ENCODE measurements at regions of chr5 and their contacts with region 1.

Region 1: GRCh38 chr5:148179234-148179824 is 11.0 kb downstream of the SPINK14 start:
- DNase-seq: peak in 1 of 2 donors; percentile 84
- H3K4me3 ChIP-seq: no peak overlapping the region
- H3K27ac ChIP-seq: no peak overlapping the region
- H3K4me1 ChIP-seq: peaks cover 0 to 6% (median 0%) of the 10 kb centered on the region in 4 donors
- H3K27me3 ChIP-seq: no peaks in the 10 kb centered on the region
- CTCF ChIP-seq: peak in 5 of 7 experiments; percentile 13 to 62 (median 60)
- EP300 ChIP-seq: no peak
- POLR2A ChIP-seq: no peak

Region 2: DNA sequence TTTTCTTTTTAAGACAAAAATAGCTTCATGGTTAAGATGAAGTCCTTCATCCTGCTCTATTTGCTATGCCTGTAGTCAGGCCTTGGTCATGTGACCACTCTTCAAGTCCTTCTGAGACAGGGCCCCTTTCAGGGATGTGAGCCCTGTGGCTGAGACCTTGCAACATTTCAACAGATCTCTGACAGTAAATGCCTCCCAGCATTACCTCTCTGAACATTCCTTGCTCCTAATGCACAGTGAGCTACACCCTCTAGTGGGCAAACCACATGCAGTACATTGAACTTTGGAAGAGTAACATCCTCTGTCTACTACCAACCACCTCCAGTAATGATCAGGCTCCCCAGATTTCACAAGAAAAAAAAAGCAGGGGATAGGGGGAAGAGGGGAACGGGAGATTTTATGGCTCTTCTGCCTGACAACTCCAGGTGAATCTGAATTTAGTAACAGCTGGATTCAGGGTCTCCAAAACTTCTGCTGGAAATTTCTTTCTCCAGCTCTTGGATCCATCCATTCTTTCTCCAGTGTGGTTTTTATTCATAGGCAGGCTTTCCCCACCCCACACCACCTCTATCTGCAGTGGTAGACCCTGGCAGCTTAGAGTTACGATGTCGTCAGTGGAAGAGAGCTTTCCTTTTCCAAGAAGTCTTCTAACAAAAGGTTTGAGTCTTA is 195.5 kb after region 1 on chr5:
- intact Hi-C with region 1: loop called (anchors 10 kb)
- DNase-seq: peak; percentile 42 to 76
- H3K4me3 ChIP-seq: no peak overlapping the region
- H3K27ac ChIP-seq: no peak overlapping the region
- H3K4me1 ChIP-seq: peaks cover 0 to 28% (median 3%) of the 10 kb centered on the region in 4 donors
- H3K27me3 ChIP-seq: no peaks in the 10 kb centered on the region
- CTCF ChIP-seq: peak in 5 of 7 experiments; percentile 50 to 74 (median 64)
- EP300 ChIP-seq: no peak
- POLR2A ChIP-seq: no peak

Region 3: GRCh38 chr5:148523139-148523538 is 343.8 kb after region 1 on chr5:
- intact Hi-C with region 1: no loop called
- DNase-seq: no peak
- H3K4me3 ChIP-seq: no peak overlapping the region
- H3K27ac ChIP-seq: no peak overlapping the region
- H3K4me1 ChIP-seq: no peaks in the 10 kb centered on the region
- H3K27me3 ChIP-seq: no peaks in the 10 kb centered on the region
- CTCF ChIP-seq: no peak
- EP300 ChIP-seq: no peak
- POLR2A ChIP-seq: no peak

Measured in stomach (tissue), 19 donors.